GM12878 (cell line): ENCODE measurements at regions of chr3 and their contacts with region 1.

Region 1: DNA sequence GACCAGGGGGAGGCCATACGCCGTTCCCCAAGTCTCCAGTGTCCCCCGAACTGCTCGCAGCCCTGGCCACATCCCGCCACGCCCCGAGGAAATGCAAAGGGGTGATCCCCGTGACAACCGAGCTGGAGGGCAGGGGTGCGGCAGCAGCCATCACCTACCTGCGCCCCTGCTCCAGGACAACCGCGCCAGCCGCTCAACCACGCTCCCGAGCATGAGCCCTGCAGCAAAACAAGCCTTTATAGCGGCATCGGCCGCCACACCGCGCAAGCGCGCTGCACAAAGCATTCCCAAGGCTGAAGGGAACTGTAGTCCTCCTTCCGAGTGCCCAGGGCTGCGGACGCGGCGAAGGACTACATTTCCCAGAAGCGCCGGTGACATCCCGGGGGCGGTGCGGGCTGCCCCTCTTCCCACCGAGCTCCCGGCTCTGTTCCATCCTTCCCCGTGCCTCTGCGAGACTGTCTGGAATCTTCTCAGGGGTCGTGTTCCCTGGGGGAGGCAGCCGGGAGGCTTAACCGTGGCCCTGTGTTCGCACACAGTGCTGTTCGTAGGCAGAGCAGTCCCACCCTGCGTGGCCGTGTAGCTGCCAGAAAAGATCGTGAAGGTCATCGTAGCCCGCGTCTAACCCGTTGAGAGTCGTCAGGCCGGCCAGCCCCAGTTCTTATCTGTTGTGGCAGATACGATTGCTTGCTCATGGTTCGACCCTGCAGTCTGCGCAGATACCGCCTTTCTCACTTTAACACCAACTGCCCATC is at the start of gene ABCC5:
- DNase-seq: peak; percentile 67
- ATAC-seq: peak; percentile 98
- H3K4me3 ChIP-seq: peak within 1 kb of the TSS; percentile 97
- H3K27ac ChIP-seq: no peak within 1 kb of the TSS; the same call in 1 of the 2 replicates
- H3K4me1 ChIP-seq: peaks cover 6% of the 10 kb centered on the region
- H3K27me3 ChIP-seq: no peaks in the 10 kb centered on the region
- CTCF ChIP-seq: no peak
- EP300 ChIP-seq: no peak
- POLR2A ChIP-seq: peak; percentile 65
- RAD21 ChIP-seq: no peak
- polyA plus RNA-seq, gene ABCC5: 6.1 to 7.2 TPM

Region 2: DNA sequence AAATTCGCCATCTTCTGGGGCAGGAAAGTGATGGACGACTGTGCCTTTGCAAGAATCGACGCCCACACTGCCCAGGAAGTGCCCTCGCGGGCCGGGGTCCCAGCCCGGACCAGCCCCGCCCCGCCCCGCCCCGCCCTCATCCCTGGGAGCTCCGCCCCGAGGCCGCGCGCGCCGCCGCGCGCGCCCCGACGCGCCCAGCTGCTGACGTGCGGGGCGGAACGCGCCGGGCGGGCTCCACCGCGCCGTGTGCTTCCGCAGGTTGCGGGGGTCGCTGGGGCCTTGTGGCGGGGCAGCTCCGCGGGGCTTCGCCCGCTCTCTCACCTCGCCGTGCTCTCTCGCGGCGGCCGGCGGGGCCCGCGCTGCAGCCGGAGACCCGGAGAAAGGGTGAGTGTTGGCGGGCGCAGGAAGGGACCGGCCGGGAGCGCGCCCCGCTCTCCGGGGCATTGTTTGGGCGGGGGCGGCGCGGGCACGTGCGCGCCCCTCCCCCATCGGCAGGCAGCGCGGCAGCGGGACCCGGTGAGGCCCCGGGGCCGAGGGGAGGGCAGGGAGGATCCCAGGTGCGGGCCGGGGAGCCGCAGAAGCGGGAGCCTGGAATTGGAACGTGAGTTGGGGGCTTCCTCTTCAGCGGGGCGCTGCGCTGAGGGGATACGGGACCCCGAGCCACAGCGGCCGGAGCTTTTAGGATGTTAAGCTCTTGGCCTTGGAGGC is 320.1 kb before region 1 on chr3 and contains the start of gene YEATS2:
- CTCF ChIA-PET with region 1: no interaction called
- POLR2A ChIA-PET with region 1: no interaction called
- RAD21 ChIA-PET with region 1: no interaction called
- SMC1A ChIA-PET with region 1: no interaction called
- in situ Hi-C with region 1: no loop called
- intact Hi-C with region 1: no loop called
- DNase-seq: no peak
- ATAC-seq: peak; percentile 82
- H3K4me3 ChIP-seq: peak within 1 kb of the TSS; percentile 99
- H3K27ac ChIP-seq: peak within 1 kb of the TSS; percentile 91
- H3K4me1 ChIP-seq: no peaks in the 10 kb centered on the region
- H3K27me3 ChIP-seq: no peaks in the 10 kb centered on the region
- CTCF ChIP-seq: no peak
- EP300 ChIP-seq: no peak
- POLR2A ChIP-seq: peak; percentile 81
- RAD21 ChIP-seq: no peak
- polyA plus RNA-seq, gene YEATS2: 1.9 to 3.8 TPM

Region 3: DNA sequence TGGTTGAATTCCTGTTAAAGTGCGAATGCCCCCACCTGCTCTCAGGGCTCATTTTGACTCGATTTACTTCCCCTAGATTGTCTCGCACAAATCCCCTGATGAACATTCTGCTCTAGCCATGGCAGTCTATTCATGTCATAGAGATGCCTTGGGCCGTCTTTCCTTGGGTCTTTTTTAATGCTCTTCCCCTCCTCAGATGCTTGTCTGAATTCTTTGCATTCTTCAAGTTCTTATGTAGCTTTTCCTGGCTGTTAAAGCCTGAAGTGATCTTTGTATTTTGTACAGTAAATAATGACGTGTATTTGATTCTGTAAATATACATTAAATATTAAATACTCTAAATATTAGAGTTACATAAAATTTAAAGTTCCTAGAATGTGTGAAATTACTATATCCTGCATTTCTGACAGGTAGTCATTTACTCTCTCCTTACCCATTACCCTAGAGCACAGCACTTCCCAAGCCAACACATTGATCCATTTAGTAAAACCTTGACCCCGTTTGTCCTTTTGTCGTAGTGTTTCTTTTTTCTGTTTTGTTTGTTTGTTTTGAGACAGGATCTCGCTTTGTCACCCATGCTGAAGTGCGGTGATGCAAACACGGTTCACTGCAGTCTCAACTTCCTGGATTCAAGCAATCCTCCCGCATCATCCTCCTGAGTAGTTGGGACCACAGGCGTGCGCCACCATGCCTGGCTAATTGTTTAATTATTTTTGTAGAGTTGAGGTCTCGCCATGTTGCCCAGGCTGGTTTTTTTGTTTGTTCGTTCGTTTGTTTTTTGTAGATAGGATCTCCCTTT is 272.3 kb before region 1 on chr3:
- CTCF ChIA-PET with region 1: no interaction called
- POLR2A ChIA-PET with region 1: no interaction called
- RAD21 ChIA-PET with region 1: no interaction called
- SMC1A ChIA-PET with region 1: no interaction called
- in situ Hi-C with region 1: no loop called
- intact Hi-C with region 1: no loop called
- DNase-seq: no peak
- ATAC-seq: no peak
- H3K4me3 ChIP-seq: no peak overlapping the region
- H3K27ac ChIP-seq: no peak overlapping the region
- H3K4me1 ChIP-seq: no peaks in the 10 kb centered on the region
- H3K27me3 ChIP-seq: no peaks in the 10 kb centered on the region
- CTCF ChIP-seq: no peak
- EP300 ChIP-seq: no peak
- POLR2A ChIP-seq: no peak
- RAD21 ChIP-seq: no peak

Region 4: GRCh38 chr3:183904833-183905780 is 112.7 kb before region 1 on chr3:
- CTCF ChIA-PET with region 1: interaction called, 21 read pairs
- POLR2A ChIA-PET with region 1: no interaction called
- RAD21 ChIA-PET with region 1: interaction called, 42 read pairs
- SMC1A ChIA-PET with region 1: interaction called, 7 read pairs
- in situ Hi-C with region 1: no loop called
- intact Hi-C with region 1: loop called (anchors 2 kb)
- DNase-seq: no peak
- ATAC-seq: no peak
- H3K4me3 ChIP-seq: no peak overlapping the region
- H3K27ac ChIP-seq: no peak overlapping the region
- H3K4me1 ChIP-seq: no peaks in the 10 kb centered on the region
- H3K27me3 ChIP-seq: no peaks in the 10 kb centered on the region
- CTCF ChIP-seq: no peak
- EP300 ChIP-seq: no peak
- POLR2A ChIP-seq: no peak
- RAD21 ChIP-seq: no peak

Region 5: DNA sequence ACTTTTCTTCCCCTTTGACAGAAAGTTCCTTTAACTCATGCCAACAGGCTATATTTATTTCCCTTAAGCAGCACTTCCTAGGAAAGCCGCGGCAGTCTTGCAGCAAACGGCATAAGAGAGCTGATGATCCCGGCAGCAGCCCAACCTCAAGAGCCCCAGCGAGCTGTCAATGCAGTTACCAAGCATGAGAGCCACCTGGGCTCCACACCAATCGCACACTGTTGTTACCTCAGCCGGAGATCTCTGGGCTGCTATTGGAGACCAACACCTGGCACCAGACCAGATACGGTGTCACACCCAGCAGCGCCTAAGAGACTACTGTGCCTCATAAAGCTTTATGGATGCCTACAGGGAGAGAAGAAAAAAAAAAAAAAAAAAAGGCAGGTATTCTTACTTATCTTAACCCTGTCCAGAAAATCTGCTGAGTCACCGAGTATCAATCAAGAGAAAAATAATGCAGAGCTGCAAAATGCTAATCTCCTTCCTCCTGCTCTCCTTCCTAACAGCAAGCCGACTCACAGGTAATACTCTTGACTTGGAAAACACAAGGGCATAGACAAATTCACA is 11.8 kb before region 1 on chr3:
- CTCF ChIA-PET with region 1: interaction called, 33 read pairs
- POLR2A ChIA-PET with region 1: interaction called, 4 read pairs
- RAD21 ChIA-PET with region 1: interaction called, 10 read pairs
- SMC1A ChIA-PET with region 1: interaction called, 11 read pairs
- in situ Hi-C with region 1: no loop called
- intact Hi-C with region 1: no loop called
- DNase-seq: peak; percentile 27
- ATAC-seq: peak; percentile 95
- H3K4me3 ChIP-seq: peak overlapping the region; percentile 33; the same call in 1 of the 2 replicates
- H3K27ac ChIP-seq: peak overlapping the region; percentile 73
- H3K4me1 ChIP-seq: peaks cover 12% of the 10 kb centered on the region
- H3K27me3 ChIP-seq: no peaks in the 10 kb centered on the region
- CTCF ChIP-seq: no peak
- EP300 ChIP-seq: no peak
- POLR2A ChIP-seq: no peak
- RAD21 ChIP-seq: no peak